Gastrocnemius medialis (tissue), 4 donors: ENCODE measurements at regions of chr7 and their contacts with region 1.

Region 1: DNA sequence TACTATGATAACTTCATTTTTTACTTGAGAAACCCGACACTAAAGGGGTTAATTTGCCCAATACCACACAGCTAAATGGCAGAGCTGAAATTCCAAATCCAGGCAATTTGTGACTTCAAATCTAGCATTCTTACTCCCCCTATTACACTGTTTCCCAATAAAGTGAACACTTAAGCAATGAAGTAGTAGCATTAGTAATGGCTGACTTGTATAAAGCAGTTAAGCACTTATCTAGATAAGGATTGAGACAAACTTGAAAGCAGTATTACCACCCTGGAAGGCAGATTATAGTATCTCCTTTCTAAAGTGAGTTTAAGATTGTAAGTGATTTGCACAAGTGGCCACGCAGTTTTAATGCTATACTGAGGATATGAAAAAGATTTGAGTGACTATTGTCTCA is 39.3 kb downstream of the WASL start:
- DNase-seq: no peak
- ATAC-seq: no peak
- H3K4me3 ChIP-seq: no peak overlapping the region
- H3K27ac ChIP-seq: no peak overlapping the region
- H3K4me1 ChIP-seq: peaks cover 23 to 28% of the 10 kb centered on the region in 2 donors
- H3K27me3 ChIP-seq: no peaks in the 10 kb centered on the region
- CTCF ChIP-seq: no peak
- POLR2A ChIP-seq: no peak

Region 2: DNA sequence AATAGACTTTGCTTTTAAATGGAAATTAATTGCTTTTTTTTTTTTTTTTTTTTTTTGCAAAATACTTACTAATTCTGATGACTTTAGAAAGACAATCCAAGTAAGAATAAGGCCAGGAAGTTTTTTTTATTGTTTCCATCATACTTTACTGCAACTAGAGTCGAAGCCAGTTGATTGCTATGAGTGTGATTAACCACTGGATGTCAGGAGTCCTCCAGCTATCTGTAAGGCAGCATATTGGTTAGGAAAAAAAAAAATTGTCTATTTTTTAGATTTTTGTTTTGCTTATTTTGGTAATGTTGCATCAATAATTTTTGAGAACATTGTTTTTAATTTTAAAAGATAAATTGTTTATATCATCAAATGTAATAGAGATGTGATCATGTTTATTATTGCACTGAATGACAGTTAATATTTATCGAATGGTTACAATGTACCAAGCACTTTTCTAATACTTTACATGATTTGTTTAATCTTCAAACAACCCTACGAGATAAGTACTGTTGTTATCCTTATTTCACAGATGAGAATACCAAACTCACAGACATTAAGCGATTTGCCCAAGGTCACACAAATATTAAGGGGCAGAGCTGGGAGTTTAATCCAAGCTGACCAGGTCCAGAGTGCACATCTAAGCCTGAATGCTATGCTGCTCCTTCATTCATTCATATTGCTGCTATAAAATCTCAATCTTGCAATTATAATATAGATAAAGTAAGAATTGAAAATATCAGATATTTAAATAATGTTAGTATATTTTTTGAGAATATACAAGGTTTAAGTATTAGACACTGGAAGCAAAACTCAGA is 73.8 kb before region 1 on chr7:
- in situ Hi-C with region 1: loop called in 3 of 4 experiments (anchors 5 to 10 kb)
- intact Hi-C with region 1: no loop called
- DNase-seq: no peak
- ATAC-seq: peak; percentile 57 to 71
- H3K4me3 ChIP-seq: no peak overlapping the region
- H3K27ac ChIP-seq: peak overlapping the region in 3 of 4 donors; percentile 67 to 83 (median 79)
- H3K4me1 ChIP-seq: peaks cover 49 to 52% of the 10 kb centered on the region in 2 donors
- H3K27me3 ChIP-seq: no peaks in the 10 kb centered on the region
- CTCF ChIP-seq: peak; percentile 25 to 69 (median 54)
- POLR2A ChIP-seq: no peak

Region 3: DNA sequence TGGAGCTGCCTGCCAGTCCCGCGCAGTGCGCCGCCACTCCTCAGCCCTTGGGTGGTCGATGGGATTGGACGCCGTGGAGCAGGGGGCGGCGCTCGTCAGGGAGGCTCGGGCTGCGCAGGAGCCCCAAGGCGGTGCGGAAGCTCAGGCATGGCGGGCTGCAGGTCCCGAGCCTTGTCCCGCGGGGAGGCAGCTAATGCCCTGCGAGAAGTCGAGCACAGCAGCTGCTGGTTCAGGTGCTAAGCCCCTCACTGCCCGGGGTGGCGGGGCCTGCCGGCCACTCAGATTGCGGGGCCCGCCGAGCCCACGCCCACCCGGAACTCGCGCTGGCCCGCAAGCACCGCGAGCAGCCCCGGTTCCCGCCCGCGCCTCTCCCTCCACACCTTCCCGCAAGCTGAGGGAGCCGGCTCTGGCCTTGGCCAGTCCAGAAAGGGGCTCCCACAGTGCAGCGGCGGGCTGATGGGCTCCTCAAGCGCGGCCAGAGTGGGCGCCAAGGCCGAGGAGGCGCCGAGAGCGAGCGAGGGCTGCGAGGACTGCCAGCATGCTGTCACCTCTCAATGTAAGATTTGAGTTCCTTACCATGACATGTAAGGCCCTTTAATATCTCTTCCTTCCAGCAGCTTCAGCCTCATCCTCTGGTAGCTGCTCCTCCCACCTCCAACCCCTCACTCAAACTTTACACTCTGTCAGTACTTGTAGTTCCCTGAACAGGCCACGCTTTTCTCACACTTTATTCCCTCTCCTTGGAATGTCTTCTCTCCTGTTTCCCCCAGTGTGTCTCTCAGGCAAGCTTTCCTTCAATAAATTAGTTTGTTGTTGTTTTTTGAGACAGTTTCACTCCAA is 53.9 kb after region 1 on chr7:
- in situ Hi-C with region 1: no loop called
- intact Hi-C with region 1: no loop called
- DNase-seq: no peak
- ATAC-seq: no peak
- H3K4me3 ChIP-seq: no peak overlapping the region
- H3K27ac ChIP-seq: no peak overlapping the region
- H3K4me1 ChIP-seq: no peaks in the 10 kb centered on the region
- H3K27me3 ChIP-seq: no peaks in the 10 kb centered on the region
- CTCF ChIP-seq: no peak
- POLR2A ChIP-seq: no peak